Caco-2 (cell line): ENCODE measurements at regions of chr14 and their contacts with region 1.

Region 1: DNA sequence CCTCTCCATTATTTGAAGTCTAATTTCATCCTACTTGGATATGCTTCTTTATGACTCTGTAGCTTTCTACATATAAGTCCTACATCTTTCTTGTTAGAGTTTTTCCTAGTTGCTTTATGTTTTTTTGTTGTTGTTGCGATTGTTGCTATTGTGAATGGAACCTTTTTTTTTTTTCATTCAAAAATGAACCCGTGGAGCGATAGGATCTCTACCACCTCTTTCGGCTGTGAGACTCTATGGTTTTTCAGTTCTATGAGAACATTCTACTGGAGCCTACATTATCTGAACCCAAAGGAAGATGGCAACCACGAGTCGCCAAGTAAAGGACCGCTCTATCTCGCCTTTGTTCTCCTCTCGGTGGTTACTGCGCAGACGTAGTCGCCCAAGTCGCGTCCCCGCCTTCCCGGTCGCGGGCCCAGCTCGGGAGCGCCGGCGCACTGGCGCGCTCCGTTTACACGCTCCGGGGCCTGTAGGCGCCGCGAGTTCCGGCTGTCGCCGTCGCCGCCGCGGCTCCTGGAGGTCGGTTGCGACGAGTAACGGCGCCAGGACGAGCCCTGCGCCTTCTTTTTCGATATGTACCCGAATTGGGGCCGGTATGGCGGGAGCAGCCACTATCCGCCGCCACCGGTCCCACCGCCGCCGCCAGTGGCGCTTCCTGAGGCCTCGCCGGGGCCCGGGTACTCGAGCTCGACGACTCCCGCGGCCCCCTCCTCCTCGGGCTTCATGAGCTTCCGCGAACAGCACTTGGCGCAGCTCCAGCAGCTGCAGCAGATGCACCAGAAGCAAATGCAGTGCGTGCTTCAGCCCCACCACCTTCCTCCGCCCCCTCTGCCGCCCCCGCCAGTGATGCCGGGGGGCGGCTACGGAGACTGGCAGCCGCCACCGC is at the start of gene YLPM1:
- DNase-seq: peak; percentile 94 to 95
- H3K4me3 ChIP-seq: peak within 1 kb of the TSS; percentile 87
- H3K4me3 Mint-ChIP-seq: peak within 1 kb of the TSS; percentile 92
- H3K27ac Mint-ChIP-seq: peak within 1 kb of the TSS; percentile 95
- H3K4me1 ChIP-seq: peaks cover 13% of the 10 kb centered on the region; the same call in 1 of the 2 replicates
- H3K4me1 Mint-ChIP-seq: no peaks in the 10 kb centered on the region
- H3K27me3 ChIP-seq: no peaks in the 10 kb centered on the region
- H3K27me3 Mint-ChIP-seq: no peaks in the 10 kb centered on the region
- CTCF ChIP-seq: peak; percentile 16 to 33
- total RNA-seq, gene YLPM1: 64.4 and 65.0 TPM in 2 replicates

Region 2: GRCh38 chr14:74712499-74713394 is 50.4 kb before region 1 on chr14 and contains the starts of genes AREL1 and FCF1:
- CTCF ChIA-PET with region 1: interaction called, 4 read pairs
- POLR2A ChIA-PET with region 1: no interaction called
- intact Hi-C with region 1: loop called (anchors 2 kb)
- DNase-seq: peak; percentile 83 to 85
- H3K4me3 ChIP-seq: peak within 1 kb of the TSS; percentile 72
- H3K4me3 Mint-ChIP-seq: peak within 1 kb of the TSS; percentile 91
- H3K27ac Mint-ChIP-seq: peak within 1 kb of the TSS; percentile 90
- H3K4me1 ChIP-seq: 0 out of 2 replicates have a peak, but pooled peaks cover 3% of the 10 kb centered on the region
- H3K4me1 Mint-ChIP-seq: no peaks in the 10 kb centered on the region
- H3K27me3 ChIP-seq: no peaks in the 10 kb centered on the region
- H3K27me3 Mint-ChIP-seq: no peaks in the 10 kb centered on the region
- CTCF ChIP-seq: no peak
- total RNA-seq, gene AREL1: 38.0 and 41.5 TPM in 2 replicates
- total RNA-seq, gene FCF1: 58.3 and 62.5 TPM in 2 replicates

Region 3: DNA sequence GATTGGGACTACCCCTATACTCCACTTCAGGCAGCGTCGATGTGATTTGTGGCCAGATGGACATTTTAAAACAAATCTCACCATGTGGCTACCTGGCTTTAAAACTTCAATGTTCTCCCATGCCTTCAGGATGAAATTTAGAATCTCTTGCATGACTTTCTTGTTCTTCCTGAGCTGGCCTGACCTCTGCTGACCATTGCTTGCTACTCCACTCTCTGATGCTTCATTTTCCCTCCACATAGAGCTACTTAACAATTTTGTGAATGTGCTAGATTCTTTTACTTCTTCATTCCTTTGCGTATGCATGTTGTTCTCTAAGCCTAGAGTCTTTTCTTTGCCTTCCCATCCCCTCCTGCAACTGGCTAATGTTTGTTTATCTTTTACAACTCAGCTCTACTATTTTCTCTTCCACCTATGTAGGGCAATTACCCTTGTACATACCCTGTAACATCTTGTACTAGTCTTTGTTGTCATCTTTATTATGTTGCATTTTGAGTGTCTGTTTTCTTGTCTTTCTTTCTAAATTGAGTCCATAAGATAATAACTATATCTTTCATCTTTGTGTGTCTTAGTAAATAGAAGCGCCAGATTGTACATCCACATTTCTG is 41.2 kb after region 1 on chr14:
- CTCF ChIA-PET with region 1: no interaction called
- POLR2A ChIA-PET with region 1: no interaction called
- intact Hi-C with region 1: loop called (anchors 1 kb)
- DNase-seq: peak in 1 of 2 experiments; percentile 31
- H3K4me3 ChIP-seq: no peak overlapping the region
- H3K4me3 Mint-ChIP-seq: no peak overlapping the region
- H3K27ac Mint-ChIP-seq: no peak overlapping the region
- H3K4me1 ChIP-seq: no peaks in the 10 kb centered on the region
- H3K4me1 Mint-ChIP-seq: no peaks in the 10 kb centered on the region
- H3K27me3 ChIP-seq: no peaks in the 10 kb centered on the region
- H3K27me3 Mint-ChIP-seq: no peaks in the 10 kb centered on the region
- CTCF ChIP-seq: peak; percentile 31 to 51